PC-9 (cell line): ENCODE measurements at regions of chr11 and their contacts with region 1.

Region 1: DNA sequence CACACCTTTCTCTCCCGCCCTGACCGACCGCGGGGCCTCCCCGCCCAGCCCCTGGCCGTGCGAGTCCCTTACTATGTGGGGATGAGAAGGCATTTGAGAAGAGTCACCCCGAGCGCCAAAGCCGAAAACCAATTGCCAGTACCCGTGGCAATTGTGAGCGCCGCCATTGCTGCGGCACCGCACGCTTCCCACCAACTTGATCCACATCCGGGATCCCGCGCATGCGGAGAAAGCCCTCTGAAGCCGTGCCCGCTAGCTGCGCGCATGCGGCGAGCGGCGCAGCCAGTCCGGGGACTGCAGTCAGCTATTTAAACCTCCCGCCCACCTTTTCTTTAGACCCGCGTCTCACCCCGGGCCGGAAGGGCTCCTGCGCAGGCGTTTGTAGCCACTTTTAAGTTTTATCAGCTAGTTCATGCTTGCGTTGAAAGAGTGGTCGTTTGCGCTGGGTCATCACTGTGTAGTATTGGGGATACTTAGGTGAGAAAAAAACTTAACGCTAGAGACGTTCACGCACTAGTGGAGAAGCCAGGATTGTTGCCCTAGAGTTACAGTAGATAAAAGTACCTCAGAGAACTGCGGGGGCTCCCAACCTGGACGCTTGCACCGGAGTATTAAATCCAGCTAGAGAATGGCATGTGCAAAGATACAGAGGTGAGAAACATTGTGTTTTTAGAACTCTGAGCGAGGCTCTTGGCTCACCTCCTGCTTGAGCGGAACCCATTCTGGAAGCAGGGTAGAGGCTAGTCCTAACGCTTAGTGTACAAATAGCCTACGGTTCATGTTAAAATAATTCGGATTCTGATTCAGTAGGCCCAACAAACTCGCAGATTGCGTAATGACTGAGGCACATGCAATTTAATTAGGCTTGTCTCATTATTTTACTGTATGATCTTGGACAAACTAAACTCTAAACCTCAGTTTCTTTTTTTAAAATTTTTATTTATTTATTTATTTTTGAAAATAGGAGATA is at the start of gene ALG8:
- DNase-seq: peak; percentile 92 to 98
- H3K4me3 ChIP-seq: peak within 1 kb of the TSS; percentile 63
- H3K27ac ChIP-seq: peak within 1 kb of the TSS; percentile 58
- H3K4me1 ChIP-seq: peaks cover 21% of the 10 kb centered on the region
- H3K27me3 ChIP-seq: no peaks in the 10 kb centered on the region
- CTCF ChIP-seq: no peak
- total RNA-seq, gene ALG8: 63.4 and 67.5 TPM in 2 replicates

Region 2: DNA sequence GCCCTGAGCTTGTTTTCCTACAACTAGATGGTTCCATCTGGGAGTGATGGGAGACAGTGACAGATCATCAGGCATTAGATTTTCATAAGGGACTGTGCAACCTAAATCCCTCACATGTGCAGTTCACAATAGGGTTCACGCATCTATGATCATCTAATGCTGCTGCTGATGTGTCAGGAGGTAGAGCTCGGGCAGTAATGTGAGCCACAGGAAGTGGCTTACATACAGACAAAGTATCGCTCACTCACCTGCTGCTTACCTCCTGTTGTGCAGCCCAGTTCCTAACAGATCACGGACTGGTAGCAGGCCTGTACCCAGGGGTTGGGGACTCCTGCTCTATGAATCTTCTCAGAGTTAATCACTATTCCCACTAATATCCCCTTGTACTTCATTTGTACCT is 306.4 kb before region 1 on chr11:
- CTCF ChIA-PET with region 1: no interaction called
- POLR2A ChIA-PET with region 1: interaction called, 14 read pairs
- intact Hi-C with region 1: no loop called
- DNase-seq: no peak
- H3K4me3 ChIP-seq: no peak overlapping the region
- H3K27ac ChIP-seq: no peak overlapping the region
- H3K4me1 ChIP-seq: no peaks in the 10 kb centered on the region
- H3K27me3 ChIP-seq: no peaks in the 10 kb centered on the region
- CTCF ChIP-seq: no peak

Region 3: GRCh38 chr11:77865805-77866204 is 273.9 kb before region 1 on chr11:
- CTCF ChIA-PET with region 1: no interaction called
- POLR2A ChIA-PET with region 1: no interaction called
- intact Hi-C with region 1: no loop called
- DNase-seq: no peak
- H3K4me3 ChIP-seq: no peak overlapping the region
- H3K27ac ChIP-seq: no peak overlapping the region
- H3K4me1 ChIP-seq: no peaks in the 10 kb centered on the region
- H3K27me3 ChIP-seq: no peaks in the 10 kb centered on the region
- CTCF ChIP-seq: no peak

Region 4: DNA sequence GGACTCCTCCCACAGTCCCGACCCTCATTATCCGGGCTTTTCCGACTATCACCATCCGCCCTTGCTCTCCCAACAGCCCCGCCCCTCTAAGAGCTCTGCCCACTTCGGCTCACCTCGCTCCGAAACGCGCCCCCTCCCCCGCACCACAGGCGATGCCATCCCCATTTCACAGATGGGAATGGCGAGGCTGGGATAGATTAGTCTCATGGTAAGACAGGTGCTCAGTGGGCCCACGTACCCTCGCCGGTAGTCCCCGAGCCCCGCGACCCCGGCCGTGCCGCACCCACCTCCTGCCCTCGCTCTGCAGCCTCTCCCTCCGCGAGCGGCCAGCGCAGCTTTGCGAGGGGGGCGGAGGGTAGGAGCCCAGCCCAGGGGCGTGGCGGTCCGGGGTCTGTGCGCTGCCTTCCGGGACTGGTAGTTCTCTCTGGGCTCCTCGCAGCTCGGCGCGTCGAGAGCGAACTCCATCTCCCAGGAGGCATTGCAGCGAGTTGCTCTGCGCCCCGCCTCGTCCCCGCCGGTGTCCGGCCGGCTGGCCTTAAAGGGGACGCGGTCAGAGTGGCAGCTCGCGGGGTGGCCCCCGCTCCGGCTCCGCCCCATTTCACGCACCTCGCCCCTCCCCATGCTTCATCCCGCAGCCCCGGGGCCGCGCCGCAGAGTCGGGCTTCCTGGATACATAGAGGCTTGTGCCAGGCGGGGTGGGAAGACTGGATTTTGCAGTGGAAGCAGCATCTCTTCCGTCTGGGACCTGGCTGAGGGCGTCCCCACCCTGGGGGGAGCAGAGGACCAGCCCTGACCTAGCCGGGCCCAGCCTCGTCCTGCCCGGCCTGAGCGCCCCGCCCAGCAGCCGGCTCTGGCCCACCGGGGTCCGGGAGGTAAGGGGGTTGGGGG is 48.8 kb after region 1 on chr11 and contains the starts of genes KCTD21 and USP35:
- CTCF ChIA-PET with region 1: no interaction called
- POLR2A ChIA-PET with region 1: interaction called, 4 read pairs
- intact Hi-C with region 1: loop called (anchors 1 kb)
- DNase-seq: peak; percentile 97 to 99
- H3K4me3 ChIP-seq: peak within 1 kb of the TSS; percentile 80
- H3K27ac ChIP-seq: no peak within 1 kb of the TSS
- H3K4me1 ChIP-seq: peaks cover 43% of the 10 kb centered on the region
- H3K27me3 ChIP-seq: no peaks in the 10 kb centered on the region
- CTCF ChIP-seq: no peak
- total RNA-seq, gene KCTD21: 16.1 and 16.5 TPM in 2 replicates
- total RNA-seq, gene USP35: 12.8 and 13.5 TPM in 2 replicates

Region 5: DNA sequence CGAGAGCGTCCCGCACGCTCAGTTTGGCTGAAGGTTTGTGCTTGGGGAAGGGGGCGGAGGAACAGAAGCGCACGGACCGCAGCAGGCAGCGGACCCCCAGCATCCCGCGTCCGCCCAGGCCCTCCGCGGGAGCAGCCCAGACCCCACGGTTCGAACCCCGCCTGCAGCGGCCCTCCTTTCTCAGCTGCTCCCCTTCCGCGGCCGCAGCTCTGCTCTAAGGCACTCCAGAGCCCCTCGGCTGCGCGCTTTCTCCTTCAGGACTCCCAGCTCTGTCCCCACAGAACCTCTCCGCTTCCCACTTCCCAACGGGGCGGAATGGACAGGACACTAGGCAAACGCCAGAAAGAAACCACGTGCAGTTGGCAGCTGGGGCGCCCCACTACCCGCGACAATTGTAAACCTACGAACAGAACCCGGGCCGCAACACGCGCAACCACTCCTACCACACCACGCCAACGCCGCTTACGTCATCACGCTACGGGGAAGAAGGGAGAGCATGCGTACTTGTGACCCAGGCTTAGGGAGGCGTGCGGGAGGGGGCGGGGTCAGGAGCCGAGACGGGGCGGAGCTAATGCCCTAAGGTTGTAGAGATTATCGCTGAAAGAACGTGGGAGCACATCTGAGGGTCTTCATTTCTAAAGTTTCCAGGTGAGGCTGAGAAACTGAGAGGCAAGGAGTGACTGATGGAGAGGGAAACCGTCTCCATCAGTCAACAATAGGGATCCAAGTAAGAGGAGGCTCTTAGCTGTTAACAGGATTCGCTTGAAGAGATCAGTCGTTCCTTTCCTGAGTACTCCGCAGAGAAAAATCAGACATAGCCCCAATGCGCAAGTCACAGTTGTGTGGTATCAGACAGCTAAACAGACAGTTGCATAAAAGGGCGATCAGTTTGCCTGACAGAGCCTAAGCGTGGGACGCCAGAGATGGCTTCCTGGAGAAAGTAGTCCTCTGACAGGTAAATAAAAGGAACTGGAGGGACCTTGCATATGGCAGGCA is 435.0 kb after region 1 on chr11 and contains the start of gene NARS2:
- CTCF ChIA-PET with region 1: no interaction called
- POLR2A ChIA-PET with region 1: no interaction called
- intact Hi-C with region 1: loop called (anchors 10 kb)
- DNase-seq: peak; percentile 95 to 97
- H3K4me3 ChIP-seq: peak within 1 kb of the TSS; percentile 71
- H3K27ac ChIP-seq: peak within 1 kb of the TSS; percentile 13
- H3K4me1 ChIP-seq: peaks cover 23% of the 10 kb centered on the region; the same call in 1 of the 2 replicates
- H3K27me3 ChIP-seq: no peaks in the 10 kb centered on the region
- CTCF ChIP-seq: no peak
- total RNA-seq, gene NARS2: 22.4 and 25.1 TPM in 2 replicates